Heart right ventricle (tissue), 16 donors: ENCODE measurements at regions of chr12 and their contacts with region 1.

Region 1: GRCh38 chr12:124906606-124907261 is 7.7 kb downstream of the UBC start:
- DNase-seq: peak; percentile 58 to 93
- ATAC-seq: peak; percentile 40 to 74 (median 53)
- H3K4me3 ChIP-seq: no peak overlapping the region
- H3K27ac ChIP-seq: peak overlapping the region in 3 of 10 donors; percentile 16 to 43 (median 32)
- H3K4me1 ChIP-seq: peaks cover 4 to 56% (median 42%) of the 10 kb centered on the region in 9 donors
- H3K27me3 ChIP-seq: no peaks in the 10 kb centered on the region
- CTCF ChIP-seq: peak; percentile 90 to 99 (median 98)

Region 2: GRCh38 chr12:124036674-124037109 is 870.0 kb before region 1 on chr12:
- intact Hi-C with region 1: loop called in 5 of 10 experiments (anchors 5 to 10 kb)
- DNase-seq: peak; percentile 23 to 33
- ATAC-seq: peak in 4 of 8 donors; percentile 44 to 61 (median 54)
- H3K4me3 ChIP-seq: no peak overlapping the region
- H3K27ac ChIP-seq: no peak overlapping the region
- H3K4me1 ChIP-seq: peaks cover 0 to 19% (median 0%) of the 10 kb centered on the region in 9 donors
- H3K27me3 ChIP-seq: no peaks in the 10 kb centered on the region
- CTCF ChIP-seq: peak; percentile 86 to 97 (median 95)

Region 3: DNA sequence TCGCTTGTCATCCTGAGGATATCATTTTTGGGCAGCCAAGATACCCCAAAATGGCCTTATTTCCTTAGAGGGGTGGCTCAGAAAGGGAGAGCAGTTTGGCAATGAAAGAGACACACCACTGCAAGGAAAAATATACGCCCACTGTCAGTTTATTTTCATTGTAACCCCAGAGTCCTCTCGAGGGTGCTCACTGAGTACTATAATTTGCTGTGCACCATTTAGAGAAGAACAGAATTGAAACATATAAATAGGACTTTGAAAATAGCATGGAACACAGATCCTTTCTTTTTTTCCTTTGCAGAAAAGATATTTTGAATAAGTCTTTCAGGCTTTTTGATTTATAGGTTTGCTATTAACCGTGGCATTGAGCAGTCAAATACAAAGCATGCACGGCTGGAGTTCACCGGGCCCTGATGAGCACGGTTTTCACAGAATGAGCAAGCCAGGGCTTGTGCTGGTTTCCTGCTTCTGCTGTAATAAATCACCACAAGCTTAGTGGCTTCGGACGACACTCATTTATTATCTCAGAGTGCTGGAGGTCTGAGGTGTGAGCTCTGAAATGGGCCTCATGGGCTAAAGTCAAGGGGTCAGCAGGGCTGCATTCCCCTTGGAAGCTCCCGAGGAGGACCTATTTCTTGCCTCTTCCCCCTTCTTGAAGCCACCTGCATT is 781.4 kb before region 1 on chr12:
- intact Hi-C with region 1: no loop called
- DNase-seq: no peak
- ATAC-seq: no peak
- H3K4me3 ChIP-seq: no peak overlapping the region
- H3K27ac ChIP-seq: no peak overlapping the region
- H3K4me1 ChIP-seq: no peaks in the 10 kb centered on the region
- H3K27me3 ChIP-seq: peaks cover 0 to 23% (median 5%) of the 10 kb centered on the region in 7 donors
- CTCF ChIP-seq: no peak

Region 4: GRCh38 chr12:124273630-124274029 is 633.1 kb before region 1 on chr12:
- intact Hi-C with region 1: no loop called
- DNase-seq: no peak
- ATAC-seq: peak in 3 of 8 donors; percentile 42 to 44 (median 43)
- H3K4me3 ChIP-seq: no peak overlapping the region
- H3K27ac ChIP-seq: no peak overlapping the region
- H3K4me1 ChIP-seq: peaks cover 0 to 5% (median 0%) of the 10 kb centered on the region in 9 donors
- H3K27me3 ChIP-seq: peaks cover 0 to 19% (median 8%) of the 10 kb centered on the region in 7 donors
- CTCF ChIP-seq: peak in 3 of 9 donors; percentile 5 to 38 (median 22)

Region 5: DNA sequence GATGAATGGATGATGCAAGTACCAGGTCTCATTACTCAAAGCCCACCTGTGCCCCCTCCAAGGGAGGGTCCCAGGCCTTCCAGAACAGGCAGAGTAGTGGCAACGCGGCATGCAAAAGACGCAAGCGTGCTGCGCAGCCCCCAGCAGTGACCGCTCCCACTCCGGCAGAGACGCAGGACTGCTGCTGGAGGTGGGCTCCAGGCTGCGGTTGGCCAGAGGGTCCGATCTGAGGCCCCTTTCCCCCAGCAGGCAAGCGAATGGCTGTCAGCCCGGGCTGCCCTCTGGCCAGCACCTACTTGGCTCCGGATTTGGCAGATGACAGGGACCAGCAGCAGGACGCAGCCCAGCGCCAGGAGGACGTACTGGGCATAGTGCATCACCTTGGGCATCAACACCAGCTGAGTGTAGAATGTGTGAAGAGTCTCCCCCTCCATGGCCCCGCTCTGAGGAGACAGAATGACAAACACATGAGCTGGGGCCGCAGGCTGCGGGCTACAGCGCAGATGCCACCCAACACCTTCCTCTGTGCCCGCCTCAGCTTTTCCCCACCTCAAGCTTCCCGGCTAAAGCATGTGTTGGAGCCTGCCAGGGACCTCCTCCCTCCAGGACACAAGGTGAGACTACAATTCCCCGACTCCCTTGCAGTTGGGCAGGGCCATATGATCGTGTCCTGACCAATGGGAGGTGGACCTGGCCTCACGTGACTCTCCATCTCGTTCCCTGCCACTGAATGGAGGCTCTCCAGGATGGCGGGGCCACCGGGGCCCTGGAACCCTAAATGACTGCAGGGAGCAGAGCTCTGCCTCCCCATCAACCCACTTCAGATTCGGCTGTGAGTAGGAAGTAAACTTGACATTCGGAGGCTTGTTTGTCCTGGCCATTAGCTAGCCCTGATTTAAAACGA is 120.4 kb before region 1 on chr12:
- intact Hi-C with region 1: loop called in 1 of 10 experiments (anchors 10 kb)
- DNase-seq: peak; percentile 78 to 89
- ATAC-seq: peak; percentile 94 to 97 (median 96)
- H3K4me3 ChIP-seq: peak overlapping the region in 9 of 10 donors; percentile 20 to 54 (median 49)
- H3K27ac ChIP-seq: peak overlapping the region in 1 of 10 donors; percentile 4
- H3K4me1 ChIP-seq: peaks cover 0 to 4% (median 0%) of the 10 kb centered on the region in 9 donors
- H3K27me3 ChIP-seq: no peaks in the 10 kb centered on the region
- CTCF ChIP-seq: no peak

Region 6: GRCh38 chr12:124837958-124838803 is 68.6 kb before region 1 on chr12:
- intact Hi-C with region 1: no loop called
- DNase-seq: peak; percentile 61 to 87
- ATAC-seq: peak; percentile 63 to 92 (median 81)
- H3K4me3 ChIP-seq: no peak overlapping the region
- H3K27ac ChIP-seq: peak overlapping the region; percentile 39 to 78 (median 62)
- H3K4me1 ChIP-seq: peaks cover 9 to 53% (median 33%) of the 10 kb centered on the region in 9 donors
- H3K27me3 ChIP-seq: no peaks in the 10 kb centered on the region
- CTCF ChIP-seq: no peak

Region 7: GRCh38 chr12:124852329-124852831 is 54.4 kb before region 1 on chr12:
- intact Hi-C with region 1: no loop called
- DNase-seq: peak in 1 of 2 donors; percentile 62
- ATAC-seq: peak in 6 of 8 donors; percentile 33 to 66 (median 56)
- H3K4me3 ChIP-seq: no peak overlapping the region
- H3K27ac ChIP-seq: peak overlapping the region in 4 of 10 donors; percentile 7 to 73 (median 50)
- H3K4me1 ChIP-seq: peaks cover 16 to 70% (median 36%) of the 10 kb centered on the region in 9 donors
- H3K27me3 ChIP-seq: no peaks in the 10 kb centered on the region
- CTCF ChIP-seq: no peak

Region 8: GRCh38 chr12:124863416-124864325 is 43.1 kb before region 1 on chr12 and contains the start of gene SCARB1:
- intact Hi-C with region 1: loop called in 3 of 10 experiments (anchors 5 kb)
- DNase-seq: peak; percentile 80 to 85
- ATAC-seq: peak; percentile 87 to 95 (median 92)
- H3K4me3 ChIP-seq: peak within 1 kb of the TSS; percentile 62 to 90 (median 86)
- H3K27ac ChIP-seq: peak within 1 kb of the TSS in 7 of 10 donors; percentile 28 to 84 (median 59)
- H3K4me1 ChIP-seq: peaks cover 3 to 42% (median 29%) of the 10 kb centered on the region in 9 donors
- H3K27me3 ChIP-seq: no peaks in the 10 kb centered on the region
- CTCF ChIP-seq: peak in 1 of 9 donors; percentile 14
- total RNA-seq, gene SCARB1: 7.7 to 19.9 (median 11.9) TPM

Region 9: DNA sequence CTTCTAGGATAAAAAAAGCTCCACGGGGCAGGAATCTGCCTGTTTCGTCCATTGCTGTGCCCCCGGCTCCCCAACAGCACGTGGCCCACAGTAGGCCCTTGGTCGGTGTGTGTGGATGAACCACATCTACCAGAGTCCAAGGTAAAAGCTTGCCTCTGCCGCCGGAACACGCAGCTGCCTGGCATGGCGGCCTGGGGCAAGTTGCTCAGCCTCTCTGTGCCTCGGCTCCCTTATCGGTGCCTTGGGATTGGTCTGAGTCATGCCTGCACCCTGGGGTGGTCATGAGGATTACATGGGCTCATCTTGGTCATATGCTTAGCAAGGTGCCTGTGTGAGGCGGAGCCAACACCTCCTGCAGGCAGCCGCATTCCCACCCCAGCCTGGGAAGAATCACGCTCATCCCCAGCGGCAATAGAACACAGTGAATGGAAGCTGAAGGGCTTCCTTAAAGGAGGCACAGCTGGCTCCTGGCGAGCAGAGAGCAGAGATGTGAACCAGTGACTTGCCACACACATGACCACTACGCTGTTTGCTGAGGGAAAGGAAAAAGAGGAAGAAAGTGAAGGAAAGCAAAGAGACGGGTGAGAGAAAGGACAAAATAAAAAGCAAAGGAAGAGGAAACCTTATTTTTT is 37.6 kb before region 1 on chr12:
- intact Hi-C with region 1: loop called in 3 of 10 experiments (anchors 5 kb)
- DNase-seq: no peak
- ATAC-seq: peak in 7 of 8 donors; percentile 48 to 63 (median 57)
- H3K4me3 ChIP-seq: peak overlapping the region in 2 of 10 donors; percentile 5 to 32
- H3K27ac ChIP-seq: peak overlapping the region in 8 of 10 donors; percentile 23 to 84 (median 46)
- H3K4me1 ChIP-seq: peaks cover 0 to 18% (median 2%) of the 10 kb centered on the region in 9 donors
- H3K27me3 ChIP-seq: no peaks in the 10 kb centered on the region
- CTCF ChIP-seq: no peak

Region 10: GRCh38 chr12:124940549-124941527 is 34.1 kb after region 1 on chr12:
- intact Hi-C with region 1: loop called in 7 of 10 experiments (anchors 2 to 5 kb)
- DNase-seq: peak; percentile 89 to 92
- ATAC-seq: peak; percentile 75 to 90 (median 82)
- H3K4me3 ChIP-seq: peak overlapping the region in 9 of 10 donors; percentile 35 to 66 (median 54)
- H3K27ac ChIP-seq: peak overlapping the region; percentile 66 to 95 (median 87)
- H3K4me1 ChIP-seq: peaks cover 5 to 47% (median 30%) of the 10 kb centered on the region in 9 donors
- H3K27me3 ChIP-seq: no peaks in the 10 kb centered on the region
- CTCF ChIP-seq: peak; percentile 87 to 96 (median 93)

Region 11: GRCh38 chr12:125065021-125065795 is 158.5 kb after region 1 on chr12 and contains the start of gene AACS:
- intact Hi-C with region 1: loop called in 1 of 10 experiments (anchors 5 kb)
- DNase-seq: peak; percentile 77 to 83
- ATAC-seq: peak; percentile 90 to 98 (median 94)
- H3K4me3 ChIP-seq: peak within 1 kb of the TSS; percentile 59 to 93 (median 84)
- H3K27ac ChIP-seq: peak within 1 kb of the TSS in 9 of 10 donors; percentile 45 to 80 (median 71)
- H3K4me1 ChIP-seq: peaks cover 4 to 29% (median 19%) of the 10 kb centered on the region in 9 donors
- H3K27me3 ChIP-seq: peaks cover 0 to 18% (median 0%) of the 10 kb centered on the region in 7 donors
- CTCF ChIP-seq: peak in 2 of 9 donors; percentile 3 to 26
- total RNA-seq, gene AACS: 8.5 to 19.4 (median 12.6) TPM